Calu3 (cell line): ENCODE measurements at regions of chr15 and their contacts with region 1.

Region 1: GRCh38 chr15:66070216-66070934 is 183.2 kb downstream of the MEGF11 start:
- DNase-seq: peak; percentile 60
- H3K4me3 Mint-ChIP-seq: no peak overlapping the region
- H3K27ac Mint-ChIP-seq: no peak overlapping the region
- H3K4me1 Mint-ChIP-seq: peaks cover 14% of the 10 kb centered on the region
- H3K27me3 Mint-ChIP-seq: peaks cover 4% of the 10 kb centered on the region
- CTCF ChIP-seq: no peak

Region 2: GRCh38 chr15:65986416-65986815 is 84.0 kb before region 1 on chr15:
- CTCF ChIA-PET with region 1: interaction called, 12 read pairs
- intact Hi-C with region 1: no loop called
- DNase-seq: no peak
- H3K4me3 Mint-ChIP-seq: no peak overlapping the region
- H3K27ac Mint-ChIP-seq: no peak overlapping the region
- H3K4me1 Mint-ChIP-seq: peaks cover 16% of the 10 kb centered on the region
- H3K27me3 Mint-ChIP-seq: peaks cover 55% of the 10 kb centered on the region
- CTCF ChIP-seq: no peak

Region 3: GRCh38 chr15:66221126-66221525 is 150.8 kb after region 1 on chr15:
- CTCF ChIA-PET with region 1: no interaction called
- intact Hi-C with region 1: no loop called
- DNase-seq: no peak
- H3K4me3 Mint-ChIP-seq: no peak overlapping the region
- H3K27ac Mint-ChIP-seq: no peak overlapping the region
- H3K4me1 Mint-ChIP-seq: no peaks in the 10 kb centered on the region
- H3K27me3 Mint-ChIP-seq: peaks cover 48% of the 10 kb centered on the region
- CTCF ChIP-seq: no peak

Region 4: DNA sequence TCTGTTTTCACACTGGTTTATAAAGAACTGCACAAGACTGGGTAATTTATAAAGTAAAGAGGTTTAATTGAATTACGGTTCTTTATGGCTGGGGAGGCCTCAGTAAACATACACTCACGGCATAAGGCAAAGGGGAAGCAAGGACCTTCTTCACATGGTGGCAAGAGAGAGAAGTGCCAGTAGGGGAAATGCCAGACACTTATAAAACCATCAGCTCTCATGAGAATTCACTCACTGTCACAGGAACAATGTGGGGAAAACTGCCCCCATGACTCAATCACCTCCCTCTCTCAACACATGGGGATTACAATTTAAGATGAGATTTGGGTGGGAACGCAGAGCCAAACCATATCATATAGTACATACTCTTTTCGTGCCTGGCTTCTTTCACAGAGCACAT is 358.7 kb after region 1 on chr15:
- CTCF ChIA-PET with region 1: no interaction called
- intact Hi-C with region 1: no loop called
- DNase-seq: no peak
- H3K4me3 Mint-ChIP-seq: no peak overlapping the region
- H3K27ac Mint-ChIP-seq: no peak overlapping the region
- H3K4me1 Mint-ChIP-seq: no peaks in the 10 kb centered on the region
- H3K27me3 Mint-ChIP-seq: no peaks in the 10 kb centered on the region
- CTCF ChIP-seq: no peak